Activated CD4-positive, alpha-beta T cell treated with anti-CD3 and anti-CD28 coated beads, Interleukin-2, amount 10 ng/mL, durations not matched to agents 24 days and 14 days (primary cell): ENCODE measurements at regions of chr12 and their contacts with region 1.

Region 1: DNA sequence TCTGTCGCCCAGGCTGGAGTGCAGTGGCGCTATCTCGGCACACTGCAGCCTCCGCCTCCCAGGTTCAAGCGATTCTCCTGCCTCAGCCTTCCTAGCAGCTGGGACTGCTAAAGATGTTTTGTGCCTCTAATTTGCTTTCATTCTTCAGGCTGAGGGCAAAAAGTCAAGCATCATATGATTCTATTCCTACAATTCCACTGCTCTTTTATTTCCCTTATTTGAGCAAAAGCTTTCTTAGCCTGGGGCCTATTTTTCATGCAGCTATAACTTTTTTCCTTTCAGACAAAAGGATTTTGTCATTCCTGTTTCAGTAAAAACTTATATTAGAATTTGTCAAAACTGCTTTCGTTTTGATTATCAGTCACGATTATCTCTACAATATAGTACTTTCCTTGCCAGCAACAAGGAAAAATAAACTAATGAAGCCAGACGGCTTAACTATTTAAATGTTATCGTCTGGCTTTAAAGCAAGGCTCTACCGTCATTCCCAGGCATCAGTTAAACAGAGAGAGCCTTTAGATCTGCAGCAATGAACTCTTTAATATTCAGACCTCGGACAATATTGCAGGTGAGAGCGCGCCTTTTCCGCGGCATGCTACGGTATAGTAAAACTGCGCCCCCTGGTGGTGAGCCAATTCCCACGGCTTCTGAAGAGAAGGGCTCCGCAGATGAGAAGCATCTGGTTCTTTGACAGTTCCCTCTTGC is 1.4 kb upstream of the SLC2A13 start:
- DNase-seq: peak; percentile 95
- H3K4me3 Mint-ChIP-seq: peak overlapping the region; percentile 63
- H3K27ac Mint-ChIP-seq: no peak overlapping the region
- H3K4me1 Mint-ChIP-seq: peaks cover 31% of the 10 kb centered on the region
- H3K27me3 Mint-ChIP-seq: peaks cover 30% of the 10 kb centered on the region

Region 2: DNA sequence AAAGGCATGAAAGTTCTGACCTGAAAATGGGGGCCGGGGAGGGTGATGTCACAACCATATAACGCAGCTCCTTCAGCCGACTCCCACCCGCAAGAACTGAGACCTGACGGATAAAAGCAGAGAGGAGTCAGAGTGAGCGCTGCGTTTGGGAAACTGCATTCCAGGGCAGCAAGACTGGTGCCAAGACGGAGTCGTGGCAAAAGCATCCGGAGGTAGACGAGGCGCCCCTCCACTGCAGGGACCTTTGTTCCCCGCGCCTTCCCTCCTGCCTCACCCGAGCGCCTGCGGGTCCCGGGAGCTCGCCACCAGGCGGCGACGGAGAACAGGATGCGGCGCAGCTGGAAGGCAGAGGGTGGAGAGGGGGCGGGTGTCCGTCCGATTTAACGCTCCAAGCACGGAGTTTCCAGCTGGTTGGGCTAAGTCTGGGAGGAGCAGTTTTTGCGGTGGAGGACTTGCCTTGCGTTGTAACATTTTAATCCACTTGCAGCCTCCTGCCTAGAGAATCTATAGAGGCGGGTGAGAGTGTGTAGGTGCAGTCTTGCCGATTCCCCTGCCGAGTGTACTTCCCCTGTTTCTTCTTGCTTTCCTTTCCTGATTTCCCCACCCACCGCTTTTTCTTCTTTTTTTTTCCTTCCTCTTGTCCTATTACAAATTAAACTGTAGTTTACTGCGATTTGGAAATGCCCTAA is 1200.6 kb before region 1 on chr12:
- intact Hi-C with region 1: loop called (anchors 10 kb)
- DNase-seq: peak; percentile 93
- H3K4me3 Mint-ChIP-seq: peak overlapping the region; percentile 93
- H3K27ac Mint-ChIP-seq: peak overlapping the region; percentile 95
- H3K4me1 Mint-ChIP-seq: peaks cover 32% of the 10 kb centered on the region
- H3K27me3 Mint-ChIP-seq: peaks cover 18% of the 10 kb centered on the region

Region 3: GRCh38 chr12:39587225-39587624 is 520.0 kb before region 1 on chr12:
- intact Hi-C with region 1: loop called (anchors 10 kb)
- DNase-seq: peak; percentile 66
- H3K4me3 Mint-ChIP-seq: no peak overlapping the region
- H3K27ac Mint-ChIP-seq: no peak overlapping the region
- H3K4me1 Mint-ChIP-seq: peaks cover 12% of the 10 kb centered on the region
- H3K27me3 Mint-ChIP-seq: no peaks in the 10 kb centered on the region

Region 4: DNA sequence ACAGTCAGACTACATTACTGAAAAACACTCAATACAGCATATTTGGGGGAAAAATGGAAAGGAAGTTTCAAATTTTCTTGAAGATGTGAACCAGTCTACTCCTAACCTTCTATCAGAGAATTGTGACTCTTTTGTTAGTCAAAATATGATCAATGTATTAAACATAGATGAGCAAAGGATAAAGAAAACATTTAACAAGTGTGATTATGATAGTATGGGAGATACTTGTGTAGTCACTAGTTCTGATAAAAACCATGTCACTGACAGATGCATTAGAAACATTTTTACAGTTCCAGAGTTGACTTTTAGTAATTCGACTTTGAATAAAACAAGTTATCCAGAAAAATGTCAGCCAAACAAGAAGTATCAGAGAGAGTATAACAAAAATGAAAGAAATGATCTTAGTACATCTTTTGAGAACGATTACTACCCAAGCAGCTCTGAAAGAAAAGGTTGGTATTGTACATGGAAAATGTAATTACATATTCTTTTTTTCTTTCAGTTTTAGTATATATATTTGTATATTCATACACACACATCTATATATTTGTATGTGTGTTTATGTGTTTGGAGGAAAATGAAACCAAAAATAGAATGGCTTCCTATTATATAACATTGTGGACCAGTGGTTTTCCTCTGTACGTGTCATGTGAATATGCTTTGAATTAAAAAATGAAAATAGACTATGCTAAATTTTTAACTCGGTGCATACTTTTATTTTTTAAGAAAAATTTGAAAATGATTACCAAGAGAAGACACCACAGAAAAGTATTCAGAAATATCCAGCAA is 424.4 kb before region 1 on chr12:
- intact Hi-C with region 1: loop called (anchors 5 kb)
- DNase-seq: no peak
- H3K4me3 Mint-ChIP-seq: peak overlapping the region; percentile 78
- H3K27ac Mint-ChIP-seq: peak overlapping the region; percentile 78
- H3K4me1 Mint-ChIP-seq: peaks cover 40% of the 10 kb centered on the region
- H3K27me3 Mint-ChIP-seq: no peaks in the 10 kb centered on the region

Region 5: GRCh38 chr12:39764944-39765560 is 342.2 kb before region 1 on chr12:
- intact Hi-C with region 1: loop called (anchors 1 kb)
- DNase-seq: no peak
- H3K4me3 Mint-ChIP-seq: no peak overlapping the region
- H3K27ac Mint-ChIP-seq: no peak overlapping the region
- H3K4me1 Mint-ChIP-seq: no peaks in the 10 kb centered on the region
- H3K27me3 Mint-ChIP-seq: peaks cover 4% of the 10 kb centered on the region

Region 6: GRCh38 chr12:40010899-40011774 is 96.1 kb before region 1 on chr12:
- intact Hi-C with region 1: loop called (anchors 1 kb)
- DNase-seq: peak; percentile 88
- H3K4me3 Mint-ChIP-seq: peak overlapping the region; percentile 61
- H3K27ac Mint-ChIP-seq: peak overlapping the region; percentile 16
- H3K4me1 Mint-ChIP-seq: peaks cover 20% of the 10 kb centered on the region
- H3K27me3 Mint-ChIP-seq: peaks cover 3% of the 10 kb centered on the region

Region 7: GRCh38 chr12:40146800-40147797 is 39.8 kb after region 1 on chr12:
- intact Hi-C with region 1: loop called (anchors 5 kb)
- DNase-seq: peak; percentile 70
- H3K4me3 Mint-ChIP-seq: no peak overlapping the region
- H3K27ac Mint-ChIP-seq: no peak overlapping the region
- H3K4me1 Mint-ChIP-seq: no peaks in the 10 kb centered on the region
- H3K27me3 Mint-ChIP-seq: peaks cover 34% of the 10 kb centered on the region

Region 8: GRCh38 chr12:40181490-40181889 is 74.2 kb after region 1 on chr12:
- intact Hi-C with region 1: no loop called
- DNase-seq: no peak
- H3K4me3 Mint-ChIP-seq: no peak overlapping the region
- H3K27ac Mint-ChIP-seq: no peak overlapping the region
- H3K4me1 Mint-ChIP-seq: peaks cover 4% of the 10 kb centered on the region
- H3K27me3 Mint-ChIP-seq: peaks cover 4% of the 10 kb centered on the region

Region 9: GRCh38 chr12:40525054-40525453 is 417.8 kb after region 1 on chr12:
- intact Hi-C with region 1: no loop called
- DNase-seq: no peak
- H3K4me3 Mint-ChIP-seq: no peak overlapping the region
- H3K27ac Mint-ChIP-seq: no peak overlapping the region
- H3K4me1 Mint-ChIP-seq: no peaks in the 10 kb centered on the region
- H3K27me3 Mint-ChIP-seq: no peaks in the 10 kb centered on the region